Caco-2 (cell line): ENCODE measurements at regions of chr4 and their contacts with region 1.

Region 1: GRCh38 chr4:169810325-169811323 is 52.9 kb upstream of the HPF1 start:
- DNase-seq: peak in 1 of 2 experiments; percentile 59
- H3K4me3 ChIP-seq: no peak overlapping the region
- H3K4me3 Mint-ChIP-seq: no peak overlapping the region
- H3K27ac Mint-ChIP-seq: no peak overlapping the region
- H3K4me1 ChIP-seq: no peaks in the 10 kb centered on the region
- H3K4me1 Mint-ChIP-seq: no peaks in the 10 kb centered on the region
- H3K27me3 ChIP-seq: no peaks in the 10 kb centered on the region
- H3K27me3 Mint-ChIP-seq: peaks cover 3% of the 10 kb centered on the region
- CTCF ChIP-seq: peak; percentile 57 to 70

Region 2: GRCh38 chr4:169881769-169882168 is 71.1 kb after region 1 on chr4:
- CTCF ChIA-PET with region 1: interaction called, 5 read pairs
- POLR2A ChIA-PET with region 1: no interaction called
- intact Hi-C with region 1: loop called (anchors 5 kb)
- DNase-seq: no peak
- H3K4me3 ChIP-seq: no peak overlapping the region
- H3K4me3 Mint-ChIP-seq: no peak overlapping the region
- H3K27ac Mint-ChIP-seq: no peak overlapping the region
- H3K4me1 ChIP-seq: no peaks in the 10 kb centered on the region
- H3K4me1 Mint-ChIP-seq: no peaks in the 10 kb centered on the region
- H3K27me3 ChIP-seq: no peaks in the 10 kb centered on the region
- H3K27me3 Mint-ChIP-seq: peaks cover 15% of the 10 kb centered on the region
- CTCF ChIP-seq: no peak